K562 (cell line): ENCODE measurements at regions of chr9 and their contacts with region 1.

Region 1: DNA sequence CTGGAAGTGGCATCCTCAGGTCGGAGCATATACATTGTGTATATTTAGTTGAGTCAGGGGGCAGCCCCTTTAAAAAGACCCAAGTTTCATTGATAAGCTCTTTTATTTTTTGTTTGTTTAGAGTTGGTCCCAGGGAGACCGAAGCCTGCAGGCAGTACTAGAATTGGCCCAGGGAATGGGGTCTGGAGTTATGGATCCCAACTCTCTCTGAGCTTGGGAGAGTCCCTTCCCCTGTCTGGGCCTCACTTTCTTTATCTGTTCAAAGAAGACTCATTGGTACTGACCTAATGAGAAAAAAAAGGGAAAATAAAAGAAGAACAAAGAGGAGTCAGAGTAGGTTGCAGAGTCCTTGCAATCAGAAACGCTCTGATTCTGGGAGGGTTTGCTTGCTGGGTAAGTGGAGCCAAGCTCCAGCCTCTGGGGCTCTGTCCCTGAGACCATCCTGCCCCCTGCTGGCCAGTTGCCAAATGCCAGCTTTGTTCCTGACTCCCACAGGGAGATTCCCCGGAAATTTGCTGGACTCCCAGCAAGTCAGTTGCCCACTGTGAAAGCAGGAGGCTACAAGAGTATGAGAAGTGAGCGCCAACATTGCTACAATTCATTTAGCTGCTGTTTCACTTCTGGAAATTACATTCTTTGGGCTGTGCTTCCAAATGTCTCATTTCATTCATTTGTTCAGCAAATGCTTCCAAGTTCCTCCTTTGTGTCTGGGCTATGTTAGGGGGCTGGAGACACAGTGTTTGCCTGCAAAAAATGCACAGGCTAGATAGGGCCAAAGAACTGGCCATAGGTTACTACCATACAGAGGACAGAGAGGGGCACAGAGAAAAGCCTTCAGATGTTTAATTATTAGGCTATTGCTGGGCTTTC is 156.2 kb downstream of the MELK start:
- DNase-seq: peak; percentile 57 to 72 (median 65)
- ATAC-seq: peak; percentile 91
- H3K4me3 ChIP-seq: no peak overlapping the region
- H3K27ac ChIP-seq: no peak overlapping the region
- H3K4me1 ChIP-seq: no peaks in the 10 kb centered on the region
- H3K27me3 ChIP-seq: peaks cover 3 to 13% of the 10 kb centered on the region in 2 experiments; a peak in 4 of 5 replicates
- CTCF ChIP-seq: peak; percentile 77 to 89 (median 81)
- EP300 ChIP-seq: no peak
- POLR2A ChIP-seq: no peak
- RAD21 ChIP-seq: peak; percentile 74 to 83

Region 2: DNA sequence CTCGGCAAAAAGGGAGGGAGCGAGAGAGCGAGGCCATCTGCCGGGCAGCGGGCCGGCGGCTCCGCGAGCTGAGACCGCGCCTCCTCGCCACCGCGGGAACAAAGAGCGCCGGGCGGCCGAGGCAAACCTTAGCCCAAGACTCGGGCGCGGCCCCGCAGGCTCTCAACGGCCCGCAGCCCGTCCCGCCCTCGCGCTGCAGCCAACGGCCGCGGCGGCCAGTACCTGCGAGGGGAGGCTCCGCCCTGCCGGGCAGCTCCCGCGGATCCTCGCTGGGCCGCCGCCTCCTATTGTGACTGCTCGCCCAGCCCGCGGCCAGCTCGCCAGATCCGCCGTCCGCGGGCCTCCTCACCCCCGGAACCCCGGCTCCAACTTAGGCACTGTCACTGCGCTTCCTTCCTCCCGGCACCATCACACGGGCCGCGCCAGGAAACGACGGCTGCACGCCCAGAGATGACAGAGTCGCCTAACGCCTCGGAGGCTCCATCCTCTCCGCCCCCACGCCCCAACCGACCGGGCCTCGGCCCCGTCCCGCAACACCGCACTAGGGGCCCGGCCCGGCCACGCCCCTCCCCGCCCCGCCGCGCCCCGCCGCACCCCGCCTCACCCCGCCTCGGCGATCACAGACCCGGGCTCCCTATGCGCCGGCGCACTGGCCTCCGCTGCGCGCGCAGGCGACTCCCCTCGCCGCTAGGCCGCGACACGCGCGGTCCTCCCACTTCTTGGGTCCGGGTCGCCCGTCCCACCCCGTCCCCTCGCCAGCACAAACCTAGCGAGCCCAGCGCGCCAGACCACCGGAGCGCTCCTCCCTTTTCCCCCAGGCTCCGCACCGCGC is 328.3 kb before region 1 on chr9:
- CTCF ChIA-PET with region 1: no interaction called
- POLR2A ChIA-PET with region 1: no interaction called
- in situ Hi-C with region 1: loop called (anchors 25 kb)
- intact Hi-C with region 1: no loop called
- DNase-seq: peak; percentile 87 to 94 (median 91)
- ATAC-seq: peak; percentile 90
- H3K4me3 ChIP-seq: peak overlapping the region; percentile 64
- H3K27ac ChIP-seq: peak overlapping the region; percentile 94
- H3K4me1 ChIP-seq: peaks cover 4 to 6% of the 10 kb centered on the region in 2 experiments; a peak in 3 of 5 replicates
- H3K27me3 ChIP-seq: no peaks in the 10 kb centered on the region
- CTCF ChIP-seq: no peak; a peak in 1 of 6 replicates
- EP300 ChIP-seq: no peak
- POLR2A ChIP-seq: peak; percentile 74
- RAD21 ChIP-seq: no peak

Region 3: DNA sequence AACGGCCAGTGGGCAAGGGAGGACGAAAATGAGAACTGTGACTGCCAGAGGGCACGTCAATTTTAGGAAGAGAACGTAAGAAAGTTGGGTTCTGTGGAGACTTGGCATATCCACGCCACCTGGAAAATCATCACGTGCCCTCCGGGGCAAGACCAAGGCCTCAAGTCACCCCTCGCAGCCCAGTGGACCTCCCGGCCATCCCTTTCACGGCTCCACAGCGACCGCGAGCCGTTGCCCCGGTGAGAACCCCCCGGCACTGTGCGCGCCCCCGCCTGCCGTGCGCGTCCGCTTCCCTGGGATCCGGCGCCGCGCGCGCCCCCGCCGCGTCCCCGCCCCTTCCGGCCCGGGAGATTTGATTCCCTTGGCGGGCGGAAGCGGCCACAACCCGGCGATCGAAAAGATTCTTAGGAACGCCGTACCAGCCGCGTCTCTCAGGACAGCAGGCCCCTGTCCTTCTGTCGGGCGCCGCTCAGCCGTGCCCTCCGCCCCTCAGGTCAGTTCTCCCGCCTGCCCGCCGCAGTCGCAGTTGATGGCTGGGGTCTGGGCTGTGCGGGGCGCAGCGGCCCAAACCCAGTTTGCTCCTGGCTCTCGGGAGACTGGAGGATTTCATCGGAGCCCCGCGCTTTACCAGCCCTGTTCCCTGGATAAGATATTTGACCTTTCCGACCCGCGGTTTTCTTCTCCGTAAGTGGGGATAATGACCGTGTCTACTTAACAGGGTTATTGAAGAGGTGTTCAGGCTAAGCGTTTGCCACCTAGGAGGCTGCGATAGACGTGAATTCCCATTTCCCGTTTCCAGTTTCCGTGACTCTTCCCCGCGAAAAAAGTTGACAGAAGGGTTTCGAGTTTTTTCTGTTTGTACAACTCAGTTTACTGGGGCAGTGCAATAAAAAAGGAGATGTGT is 156.1 kb before region 1 on chr9 and contains the start of gene MELK:
- CTCF ChIA-PET with region 1: no interaction called
- POLR2A ChIA-PET with region 1: no interaction called
- in situ Hi-C with region 1: no loop called
- intact Hi-C with region 1: loop called (anchors 2 kb)
- DNase-seq: peak; percentile 88 to 93 (median 90)
- ATAC-seq: peak; percentile 89
- H3K4me3 ChIP-seq: peak within 1 kb of the TSS; percentile 93
- H3K27ac ChIP-seq: peak within 1 kb of the TSS; percentile 84
- H3K4me1 ChIP-seq: peaks cover 10% of the 10 kb centered on the region in 2 experiments; a peak in 2 of 5 replicates
- H3K27me3 ChIP-seq: no peaks in the 10 kb centered on the region
- CTCF ChIP-seq: no peak
- EP300 ChIP-seq: no peak
- POLR2A ChIP-seq: peak; percentile 83
- RAD21 ChIP-seq: no peak
- polyA plus RNA-seq, gene MELK: 43.2 to 57.3 TPM

Region 4: GRCh38 chr9:36632892-36633291 is 96.0 kb before region 1 on chr9:
- CTCF ChIA-PET with region 1: interaction called, 4 read pairs
- POLR2A ChIA-PET with region 1: no interaction called
- in situ Hi-C with region 1: no loop called
- intact Hi-C with region 1: loop called (anchors 5 kb)
- DNase-seq: peak in 3 of 4 experiments; percentile 8 to 36 (median 25)
- ATAC-seq: no peak
- H3K4me3 ChIP-seq: no peak overlapping the region
- H3K27ac ChIP-seq: no peak overlapping the region
- H3K4me1 ChIP-seq: no peaks in the 10 kb centered on the region
- H3K27me3 ChIP-seq: no peaks in the 10 kb centered on the region
- CTCF ChIP-seq: peak in 2 of 3 experiments; percentile 20 to 46; a peak in 3 of 6 replicates
- EP300 ChIP-seq: no peak
- POLR2A ChIP-seq: no peak
- RAD21 ChIP-seq: peak; percentile 14 to 20; a peak in 1 of 4 replicates